PC-9 (cell line): ENCODE measurements at regions of chr1 and their contacts with region 1.

Region 1: GRCh38 chr1:240831191-240831631 is 219.3 kb upstream of the GREM2 start:
- DNase-seq: peak; percentile 9 to 69
- H3K4me3 ChIP-seq: no peak overlapping the region
- H3K27ac ChIP-seq: no peak overlapping the region
- H3K4me1 ChIP-seq: no peaks in the 10 kb centered on the region
- H3K27me3 ChIP-seq: peaks cover 29% of the 10 kb centered on the region; the same call in 1 of the 2 replicates
- CTCF ChIP-seq: no peak

Region 2: GRCh38 chr1:240797050-240797449 is 34.2 kb before region 1 on chr1:
- CTCF ChIA-PET with region 1: no interaction called
- POLR2A ChIA-PET with region 1: no interaction called
- intact Hi-C with region 1: loop called (anchors 5 kb)
- DNase-seq: peak; percentile 31 to 65
- H3K4me3 ChIP-seq: no peak overlapping the region
- H3K27ac ChIP-seq: no peak overlapping the region
- H3K4me1 ChIP-seq: peaks cover 10% of the 10 kb centered on the region; the same call in 1 of the 2 replicates
- H3K27me3 ChIP-seq: no peaks in the 10 kb centered on the region
- CTCF ChIP-seq: no peak

Region 3: GRCh38 chr1:240806201-240806745 is 24.9 kb before region 1 on chr1:
- CTCF ChIA-PET with region 1: no interaction called
- POLR2A ChIA-PET with region 1: interaction called, 4 read pairs
- intact Hi-C with region 1: loop called (anchors 1 kb)
- DNase-seq: no peak
- H3K4me3 ChIP-seq: no peak overlapping the region
- H3K27ac ChIP-seq: no peak overlapping the region
- H3K4me1 ChIP-seq: peaks cover 21% of the 10 kb centered on the region
- H3K27me3 ChIP-seq: 0 out of 2 replicates have a peak, but pooled peaks cover under 1% of the 10 kb centered on the region
- CTCF ChIP-seq: no peak